ENCODE measurements at regions of chr3 and their contacts with region 1.

Region 1: GRCh38 chr3:196609343-196609775 is 30.1 kb upstream of the NRROS start:
- DNase-seq: peak; percentile 94
- H3K4me3 Mint-ChIP-seq: no peak overlapping the region
- H3K27ac Mint-ChIP-seq: no peak overlapping the region
- H3K4me1 Mint-ChIP-seq: peaks cover 10% of the 10 kb centered on the region
- H3K27me3 Mint-ChIP-seq: peaks cover 21% of the 10 kb centered on the region
- CTCF ChIP-seq: peak; percentile 83

Region 2: GRCh38 chr3:196684548-196685407 is 75.4 kb after region 1 on chr3:
- CTCF ChIA-PET with region 1: interaction called, 23 read pairs
- intact Hi-C with region 1: loop called (anchors 1 kb)
- DNase-seq: peak; percentile 73
- H3K4me3 Mint-ChIP-seq: no peak overlapping the region
- H3K27ac Mint-ChIP-seq: no peak overlapping the region
- H3K4me1 Mint-ChIP-seq: peaks cover 17% of the 10 kb centered on the region
- H3K27me3 Mint-ChIP-seq: peaks cover 16% of the 10 kb centered on the region
- CTCF ChIP-seq: peak; percentile 77

Region 3: GRCh38 chr3:196699749-196700148 is 90.4 kb after region 1 on chr3:
- CTCF ChIA-PET with region 1: no interaction called
- intact Hi-C with region 1: no loop called
- DNase-seq: no peak
- H3K4me3 Mint-ChIP-seq: no peak overlapping the region
- H3K27ac Mint-ChIP-seq: no peak overlapping the region
- H3K4me1 Mint-ChIP-seq: no peaks in the 10 kb centered on the region
- H3K27me3 Mint-ChIP-seq: no peaks in the 10 kb centered on the region
- CTCF ChIP-seq: no peak

Region 4: DNA sequence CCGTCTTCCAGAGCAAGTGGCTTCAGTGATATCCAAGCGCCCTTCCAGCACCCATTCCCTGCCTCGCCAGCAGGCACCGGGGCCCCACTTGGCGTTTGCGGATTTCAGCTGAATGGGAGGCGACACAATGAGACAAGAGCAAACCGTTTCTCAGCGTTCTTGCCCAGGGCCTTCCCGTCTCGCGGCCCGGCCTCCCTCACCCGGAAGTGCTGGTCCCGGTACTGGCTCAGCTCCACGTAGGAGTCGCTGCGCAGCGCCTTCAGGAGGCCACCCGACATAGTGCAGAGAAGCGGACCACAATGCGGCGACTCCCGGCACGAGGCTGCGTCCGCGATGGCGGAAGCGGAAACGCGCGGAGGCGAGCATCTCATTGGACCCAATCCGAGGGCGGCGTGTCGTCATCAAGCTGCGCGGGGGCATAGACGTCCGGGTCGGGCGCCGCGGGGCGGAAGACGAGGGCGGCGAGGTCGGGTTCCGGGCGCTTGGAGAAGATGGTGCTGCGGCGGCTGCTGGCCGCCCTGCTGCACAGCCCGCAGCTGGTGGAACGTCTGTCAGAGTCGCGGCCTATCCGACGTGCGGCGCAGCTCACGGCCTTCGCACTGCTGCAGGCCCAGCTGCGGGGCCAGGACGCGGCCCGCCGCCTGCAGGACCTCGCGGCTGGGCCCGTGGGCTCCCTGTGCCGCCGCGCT is 333.0 kb after region 1 on chr3 and contains the start of gene NCBP2:
- CTCF ChIA-PET with region 1: interaction called, 12 read pairs
- intact Hi-C with region 1: loop called (anchors 10 kb)
- DNase-seq: peak; percentile 99
- H3K4me3 Mint-ChIP-seq: peak within 1 kb of the TSS; percentile 96
- H3K27ac Mint-ChIP-seq: peak within 1 kb of the TSS; percentile 97
- H3K4me1 Mint-ChIP-seq: peaks cover 9% of the 10 kb centered on the region
- H3K27me3 Mint-ChIP-seq: no peaks in the 10 kb centered on the region
- CTCF ChIP-seq: peak; percentile 52
- total RNA-seq, gene NCBP2: 67.1 and 71.5 TPM in 2 replicates

Region 5: GRCh38 chr3:196969660-196970546 is 360.5 kb after region 1 on chr3:
- CTCF ChIA-PET with region 1: no interaction called
- intact Hi-C with region 1: loop called (anchors 5 kb)
- DNase-seq: peak; percentile 83
- H3K4me3 Mint-ChIP-seq: peak overlapping the region; percentile 80
- H3K27ac Mint-ChIP-seq: peak overlapping the region; percentile 27
- H3K4me1 Mint-ChIP-seq: peaks cover 10% of the 10 kb centered on the region
- H3K27me3 Mint-ChIP-seq: peaks cover 16% of the 10 kb centered on the region
- CTCF ChIP-seq: peak; percentile 85